HEK293T (cell line): ENCODE measurements at regions of chr1 and their contacts with region 1.

Region 1: GRCh38 chr1:28877132-28877781 is 37.1 kb upstream of the EPB41 start:
- DNase-seq: peak; percentile 92

Region 2: DNA sequence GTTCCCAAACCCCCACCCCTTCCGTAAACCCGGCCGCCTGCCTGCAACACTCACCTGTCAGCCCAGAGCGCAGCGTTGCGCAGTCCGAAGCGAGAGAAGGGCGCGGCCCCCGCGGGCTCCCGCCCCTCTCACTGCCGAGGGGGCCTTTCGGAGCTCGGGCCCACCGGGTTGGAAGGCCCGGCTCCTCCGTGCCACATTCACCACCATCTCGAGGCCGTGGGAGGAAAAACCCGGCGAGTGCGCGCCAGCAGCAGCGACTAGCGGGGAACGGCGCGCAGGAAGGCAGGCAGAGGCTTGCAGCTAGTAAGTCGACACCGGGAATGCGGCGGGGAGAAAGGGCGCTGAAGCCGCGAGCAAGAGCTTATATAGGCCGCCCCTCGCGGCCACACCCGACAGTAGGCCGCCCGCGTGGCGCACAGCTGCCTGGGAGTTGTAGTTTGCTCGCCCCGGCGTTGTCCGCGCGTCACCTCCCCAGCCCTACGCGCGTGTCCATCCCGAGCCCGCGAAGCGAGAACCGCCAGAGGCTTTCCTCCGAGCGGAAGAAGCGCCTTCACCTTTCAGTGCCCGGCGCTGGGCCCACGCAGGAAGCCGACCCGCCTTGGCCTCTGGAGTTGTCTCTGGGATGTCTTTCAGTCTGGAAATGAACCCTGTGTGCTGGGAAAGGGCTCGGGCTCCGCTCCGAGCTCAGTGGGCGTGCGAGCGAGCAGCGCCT is 295.6 kb before region 1 on chr1:
- CTCF ChIA-PET with region 1: no interaction called
- POLR2A ChIA-PET with region 1: interaction called, 14 read pairs
- DNase-seq: peak; percentile 100

Region 3: DNA sequence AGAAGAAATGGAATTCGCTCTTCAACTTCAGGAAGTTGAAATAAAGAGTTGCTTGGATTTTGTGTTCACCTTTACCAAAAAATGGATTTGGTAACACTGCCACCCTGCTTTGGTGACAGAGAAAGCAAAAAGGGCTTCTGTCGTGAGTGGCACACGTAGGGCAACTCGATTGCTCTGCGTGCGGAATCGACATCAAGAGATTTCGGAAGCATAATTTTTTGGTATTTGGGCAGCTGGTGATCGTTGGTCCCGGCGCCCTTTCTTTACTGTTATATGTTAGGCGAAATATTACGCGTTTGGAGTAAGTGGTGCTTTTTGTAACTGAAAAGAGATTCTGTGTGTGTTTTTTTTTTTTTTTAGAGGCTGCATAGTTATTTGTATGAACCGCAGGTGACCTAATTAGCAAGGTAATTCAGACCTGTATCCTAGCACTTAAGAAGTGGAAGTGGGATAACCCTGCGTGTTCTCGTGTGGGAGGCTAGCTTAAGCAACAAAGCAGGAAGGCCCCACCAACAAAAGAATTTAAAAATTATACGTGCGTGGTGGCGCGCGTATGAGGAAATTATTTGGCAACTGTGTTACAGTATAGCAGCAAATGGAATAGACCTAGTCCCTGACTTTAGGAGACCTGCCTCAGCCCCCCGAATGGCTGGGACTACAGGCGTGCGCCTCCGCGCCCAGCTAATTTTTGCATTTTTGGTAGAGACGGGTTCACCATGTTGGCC is 228.6 kb before region 1 on chr1 and contains the start of gene RNU11:
- CTCF ChIA-PET with region 1: interaction called, 4 read pairs
- POLR2A ChIA-PET with region 1: interaction called, 21 read pairs
- DNase-seq: peak; percentile 79

Region 4: DNA sequence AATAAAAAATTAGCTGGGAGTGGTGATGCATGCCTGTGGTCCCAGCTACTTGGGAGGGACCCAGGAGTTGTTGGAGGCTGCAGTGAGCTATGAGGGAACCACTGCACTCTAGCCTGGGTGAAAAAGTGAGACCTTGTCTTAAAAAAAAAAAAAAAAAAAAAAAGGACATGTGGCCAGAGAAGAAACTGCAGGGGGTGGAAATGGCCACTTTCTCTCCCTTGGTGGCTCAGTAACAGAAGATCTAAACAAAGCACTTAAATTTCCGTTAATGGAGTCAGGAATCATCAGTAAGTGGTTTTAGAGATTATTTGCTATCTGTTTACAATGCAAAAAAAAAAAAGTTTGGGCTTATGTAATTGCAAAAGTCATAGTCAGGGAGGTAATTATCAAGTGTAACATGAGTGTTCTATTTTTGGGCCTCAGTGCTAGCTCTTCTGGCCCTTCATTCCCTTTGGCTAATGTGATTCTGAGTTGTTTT is 84.6 kb before region 1 on chr1:
- CTCF ChIA-PET with region 1: interaction called, 14 read pairs
- POLR2A ChIA-PET with region 1: no interaction called
- DNase-seq: peak; percentile 65

Region 5: GRCh38 chr1:28865997-28866650 is 11.1 kb before region 1 on chr1:
- CTCF ChIA-PET with region 1: interaction called, 15 read pairs
- POLR2A ChIA-PET with region 1: interaction called, 9 read pairs
- DNase-seq: no peak

Region 6: DNA sequence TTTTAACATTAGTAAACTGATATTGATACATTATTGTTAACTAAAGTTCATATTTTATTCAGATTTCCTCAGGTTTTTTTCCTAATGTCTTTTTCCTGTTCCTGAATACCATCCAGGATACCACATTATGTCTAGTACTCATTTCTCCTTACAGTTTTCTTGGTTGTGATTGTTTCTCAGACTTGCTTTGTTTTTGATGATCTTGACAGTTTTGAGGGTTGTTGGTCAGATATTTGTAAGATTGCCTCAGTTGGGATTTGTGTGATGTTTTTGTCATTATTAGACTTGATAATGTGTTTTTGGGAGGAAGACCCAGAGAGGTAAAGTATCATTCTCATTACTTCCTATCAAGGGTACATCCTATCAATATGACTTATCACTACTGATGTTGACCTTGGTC is 56.7 kb after region 1 on chr1:
- CTCF ChIA-PET with region 1: no interaction called
- POLR2A ChIA-PET with region 1: no interaction called
- DNase-seq: no peak

Region 7: GRCh38 chr1:29043274-29043965 is 166.2 kb after region 1 on chr1:
- CTCF ChIA-PET with region 1: interaction called, 10 read pairs
- POLR2A ChIA-PET with region 1: no interaction called
- DNase-seq: no peak